AG04449 (cell line): ENCODE measurements at regions of chr20 and their contacts with region 1.

Region 1: GRCh38 chr20:11901127-11901526 is 16.6 kb upstream of the BTBD3 start:
- DNase-seq: peak; percentile 50
- H3K4me3 ChIP-seq: no peak overlapping the region; the same call in 1 of the 2 replicates
- CTCF ChIP-seq: no peak

Region 2: GRCh38 chr20:11912013-11912658 is 11.0 kb after region 1 on chr20:
- CTCF ChIA-PET with region 1: interaction called, 10 read pairs
- POLR2A ChIA-PET with region 1: no interaction called
- DNase-seq: no peak
- H3K4me3 ChIP-seq: no peak overlapping the region
- CTCF ChIP-seq: peak; percentile 27